ENCODE measurements at regions of chr2 and their contacts with region 1.

Region 1: GRCh38 chr2:43149482-43150107 is 76.8 kb downstream of the ZFP36L2 start:
- DNase-seq: no peak
- H3K4me3 Mint-ChIP-seq: peak overlapping the region; percentile 31
- H3K27ac Mint-ChIP-seq: peak overlapping the region; percentile 87
- H3K4me1 Mint-ChIP-seq: peaks cover 45% of the 10 kb centered on the region
- H3K27me3 Mint-ChIP-seq: no peaks in the 10 kb centered on the region

Region 2: DNA sequence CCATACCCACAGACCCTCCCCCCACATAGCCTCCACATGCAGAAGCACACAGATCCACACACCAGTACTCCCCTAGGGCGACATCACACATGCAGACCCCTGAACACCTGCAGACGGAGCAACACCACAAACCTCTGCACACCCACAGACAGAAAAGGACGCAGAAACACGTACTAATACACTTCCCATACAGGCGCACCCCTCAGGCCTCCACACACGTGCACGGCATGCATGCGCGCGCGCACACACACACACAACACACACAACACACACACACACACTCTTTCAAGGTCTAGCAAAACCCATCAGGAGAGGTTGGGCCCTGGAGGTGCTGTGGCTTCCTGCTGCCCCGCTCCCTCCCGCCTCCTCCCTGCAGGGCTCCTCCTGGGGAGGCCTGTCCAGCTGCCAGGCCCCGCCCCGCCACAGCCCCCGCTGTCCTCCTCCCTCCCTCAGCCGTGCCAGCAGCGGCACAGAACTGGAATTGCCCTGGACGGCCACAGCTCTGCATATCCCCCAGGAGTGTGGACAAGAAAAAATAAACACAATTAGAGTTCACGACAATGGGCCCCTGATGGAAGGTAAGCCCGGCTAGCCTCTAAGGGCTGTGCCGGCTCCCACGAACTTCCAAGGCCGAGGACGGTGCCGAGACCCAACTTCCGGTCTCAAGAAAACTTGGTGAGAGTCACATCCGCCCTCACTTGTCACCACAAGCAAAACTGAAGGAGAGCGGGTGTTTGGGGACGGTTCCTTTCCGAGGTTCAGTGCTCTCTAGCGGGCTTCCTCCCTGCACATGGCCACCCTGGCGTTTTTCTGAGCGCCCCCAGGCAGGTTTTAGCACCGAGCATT is 70.0 kb after region 1 on chr2:
- intact Hi-C with region 1: loop called (anchors 1 kb)
- DNase-seq: peak; percentile 78
- H3K4me3 Mint-ChIP-seq: peak overlapping the region; percentile 94
- H3K27ac Mint-ChIP-seq: peak overlapping the region; percentile 88
- H3K4me1 Mint-ChIP-seq: peaks cover 48% of the 10 kb centered on the region
- H3K27me3 Mint-ChIP-seq: no peaks in the 10 kb centered on the region